AG04450 (cell line): ENCODE measurements at regions of chr12 and their contacts with region 1.

Region 1: DNA sequence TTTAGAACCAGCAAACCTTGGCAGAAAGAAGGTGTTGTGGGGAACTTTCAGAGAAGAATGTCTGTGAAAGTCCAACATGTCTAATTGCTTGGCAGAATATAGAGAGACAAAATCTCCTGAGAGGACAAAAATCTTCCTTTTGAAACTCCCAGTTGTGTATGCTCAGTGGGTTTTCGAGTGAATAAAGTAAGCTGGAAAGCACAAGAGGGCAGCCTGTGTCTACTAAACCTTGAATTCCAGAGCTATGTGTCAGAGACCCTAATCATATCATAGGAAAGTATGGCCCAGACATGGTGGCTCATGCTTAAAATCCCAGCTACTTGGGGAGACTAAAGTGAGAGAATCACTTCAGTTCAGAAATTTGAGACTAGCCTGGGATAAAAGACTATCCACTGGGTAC is 661.2 kb downstream of the SLC16A7 start:
- DNase-seq: peak; percentile 59
- H3K4me3 ChIP-seq: no peak overlapping the region
- H3K27ac ChIP-seq: no peak overlapping the region
- H3K27me3 ChIP-seq: no peaks in the 10 kb centered on the region
- CTCF ChIP-seq: peak; percentile 29

Region 2: GRCh38 chr12:60112763-60113162 is 144.3 kb before region 1 on chr12:
- CTCF ChIA-PET with region 1: no interaction called
- POLR2A ChIA-PET with region 1: no interaction called
- DNase-seq: no peak
- H3K4me3 ChIP-seq: no peak overlapping the region
- H3K27ac ChIP-seq: no peak overlapping the region
- H3K27me3 ChIP-seq: no peaks in the 10 kb centered on the region
- CTCF ChIP-seq: no peak

Region 3: DNA sequence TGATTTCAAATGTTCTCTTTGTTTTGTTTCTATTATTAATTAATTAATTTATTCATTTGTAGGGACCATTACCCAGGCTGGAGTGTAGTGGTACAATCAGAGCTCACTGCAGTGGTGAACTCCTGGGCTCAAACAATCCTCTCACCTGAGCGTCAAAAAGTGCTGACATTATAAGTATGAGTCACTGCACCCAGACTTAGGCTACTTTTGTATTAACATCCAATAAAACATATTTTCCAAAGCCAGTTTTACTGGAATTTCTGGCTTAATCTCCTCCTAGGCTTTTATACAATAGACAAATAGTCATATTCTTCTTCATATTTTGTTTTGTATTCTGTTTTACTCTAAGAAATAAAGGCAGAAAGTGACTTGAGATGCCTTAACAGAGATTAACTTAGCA is 88.4 kb after region 1 on chr12:
- CTCF ChIA-PET with region 1: no interaction called
- POLR2A ChIA-PET with region 1: no interaction called
- DNase-seq: no peak
- H3K4me3 ChIP-seq: no peak overlapping the region
- H3K27ac ChIP-seq: no peak overlapping the region
- H3K27me3 ChIP-seq: no peaks in the 10 kb centered on the region
- CTCF ChIP-seq: no peak

Region 4: GRCh38 chr12:60494244-60494643 is 237.2 kb after region 1 on chr12:
- CTCF ChIA-PET with region 1: interaction called, 15 read pairs
- POLR2A ChIA-PET with region 1: no interaction called
- DNase-seq: peak; percentile 27
- H3K4me3 ChIP-seq: no peak overlapping the region
- H3K27ac ChIP-seq: no peak overlapping the region
- H3K27me3 ChIP-seq: no peaks in the 10 kb centered on the region
- CTCF ChIP-seq: peak; percentile 77